ENCODE measurements at regions of chr1 and their contacts with region 1.

Region 1: GRCh38 chr1:37323486-37324377 is 150.6 kb upstream of the ZC3H12A start:
- DNase-seq: no peak

Region 2: DNA sequence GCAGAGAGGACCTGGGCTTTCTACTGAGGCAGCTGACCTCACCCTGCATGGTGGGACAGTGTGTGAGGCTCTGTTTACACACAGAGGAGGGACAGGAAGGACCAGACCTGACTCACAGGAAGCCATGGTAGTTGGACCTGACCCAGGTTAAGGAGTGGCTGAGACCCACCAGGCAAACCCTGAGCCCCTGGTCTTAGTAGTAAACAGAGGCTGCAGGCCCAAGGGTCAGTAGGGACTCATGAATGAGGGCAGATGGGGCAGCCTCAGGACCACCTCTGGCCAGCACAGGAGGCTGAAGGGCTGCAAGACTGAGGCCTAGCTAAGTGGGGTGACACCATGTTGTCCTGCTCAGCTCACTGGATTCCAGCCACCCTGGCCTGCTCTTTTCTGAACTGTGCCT is 562.6 kb before region 1 on chr1:
- intact Hi-C with region 1: no loop called
- DNase-seq: peak in 1 of 10 donors; percentile 54

Region 3: DNA sequence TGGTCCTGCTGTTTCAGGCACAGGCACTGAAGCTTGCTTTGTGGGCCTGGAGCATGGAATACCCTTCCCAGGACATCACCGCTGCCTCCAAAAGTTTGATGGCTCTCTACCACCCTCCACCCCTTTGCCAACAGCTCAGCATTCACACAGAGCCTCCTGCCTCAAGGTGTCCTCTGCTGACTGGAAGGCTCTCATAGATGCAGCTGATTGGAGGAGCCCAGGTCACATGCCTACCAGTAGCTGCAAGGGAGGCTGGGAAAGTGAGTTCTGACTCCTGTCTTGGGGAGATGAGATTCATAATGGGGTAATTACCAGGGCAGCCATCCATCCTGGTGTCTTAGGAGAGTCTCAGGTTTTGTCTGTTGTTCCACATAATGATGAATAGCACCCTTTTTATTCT is 164.6 kb before region 1 on chr1:
- intact Hi-C with region 1: loop called (anchors 10 kb)
- DNase-seq: no peak

Region 4: GRCh38 chr1:37338658-37339057 is 14.9 kb after region 1 on chr1:
- intact Hi-C with region 1: loop called (anchors 2 kb)
- DNase-seq: peak in 8 of 10 donors; percentile 17 to 94 (median 54)

Measured in posterior cingulate gyrus (tissue), 11 donors.